ENCODE measurements at regions of chr11 and their contacts with region 1.

Region 1: GRCh38 chr11:75768112-75768908 is at the start of gene DGAT2:
- DNase-seq: peak; percentile 84
- ATAC-seq: peak; percentile 90
- H3K4me3 ChIP-seq: peak within 1 kb of the TSS; percentile 74 to 81 (median 80)
- H3K27ac ChIP-seq: peak within 1 kb of the TSS; percentile 90
- H3K4me1 ChIP-seq: peaks cover 73% of the 10 kb centered on the region
- H3K27me3 ChIP-seq: no peaks in the 10 kb centered on the region
- CTCF ChIP-seq: peak; percentile 95
- EP300 ChIP-seq: peak; percentile 23; a peak in 2 of 4 replicates
- POLR2A ChIP-seq: peak; percentile 61 to 83
- RAD21 ChIP-seq: peak; percentile 93
- total RNA-seq, gene DGAT2: 39.4 and 65.6 TPM in 2 replicates

Region 2: DNA sequence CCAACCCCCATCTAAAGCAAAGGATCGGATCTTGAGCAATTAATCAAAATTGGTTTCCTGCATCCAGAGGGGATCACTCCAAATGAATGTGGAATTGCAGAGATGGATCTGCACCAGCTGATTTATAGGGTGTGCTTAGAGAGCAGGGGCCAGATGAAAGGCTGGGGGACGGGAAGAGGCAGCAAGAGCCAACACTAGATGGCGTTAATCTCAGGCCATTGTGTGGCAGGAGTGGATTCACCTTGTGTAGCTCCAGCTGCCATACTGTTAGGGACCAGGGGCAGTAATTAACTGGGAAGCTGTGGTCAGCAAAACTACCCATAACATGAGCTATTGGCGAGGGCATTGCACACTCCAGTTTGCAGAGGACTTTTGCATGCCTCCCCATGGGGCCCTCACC is 170.7 kb before region 1 on chr11:
- CTCF ChIA-PET with region 1: interaction called, 6 read pairs
- POLR2A ChIA-PET with region 1: no interaction called
- in situ Hi-C with region 1: loop called (anchors 5 kb)
- intact Hi-C with region 1: no loop called
- DNase-seq: peak; percentile 36
- ATAC-seq: peak; percentile 86
- H3K4me3 ChIP-seq: no peak overlapping the region
- H3K27ac ChIP-seq: no peak overlapping the region
- H3K4me1 ChIP-seq: peaks cover 10% of the 10 kb centered on the region
- H3K27me3 ChIP-seq: peaks cover 2 to 14% of the 10 kb centered on the region in 2 experiments; a peak in 3 of 5 replicates
- CTCF ChIP-seq: peak; percentile 78
- EP300 ChIP-seq: no peak
- POLR2A ChIP-seq: no peak
- RAD21 ChIP-seq: no peak; the same call in 1 of the 2 replicates

Region 3: GRCh38 chr11:75717608-75718418 is 50.5 kb before region 1 on chr11 and contains the start of gene MOGAT2:
- CTCF ChIA-PET with region 1: interaction called, 19 read pairs
- POLR2A ChIA-PET with region 1: interaction called, 50 read pairs
- in situ Hi-C with region 1: loop called (anchors 5 kb)
- intact Hi-C with region 1: loop called (anchors 1 kb)
- DNase-seq: no peak
- ATAC-seq: no peak
- H3K4me3 ChIP-seq: peak within 1 kb of the TSS in 1 of 3 experiments; percentile 76; a peak in 2 of 6 replicates
- H3K27ac ChIP-seq: peak within 1 kb of the TSS; percentile 79
- H3K4me1 ChIP-seq: peaks cover 77% of the 10 kb centered on the region
- H3K27me3 ChIP-seq: no peaks in the 10 kb centered on the region
- CTCF ChIP-seq: no peak
- EP300 ChIP-seq: no peak
- POLR2A ChIP-seq: no peak
- RAD21 ChIP-seq: no peak
- total RNA-seq, gene MOGAT2: 27.2 and 27.8 TPM in 2 replicates

Region 4: DNA sequence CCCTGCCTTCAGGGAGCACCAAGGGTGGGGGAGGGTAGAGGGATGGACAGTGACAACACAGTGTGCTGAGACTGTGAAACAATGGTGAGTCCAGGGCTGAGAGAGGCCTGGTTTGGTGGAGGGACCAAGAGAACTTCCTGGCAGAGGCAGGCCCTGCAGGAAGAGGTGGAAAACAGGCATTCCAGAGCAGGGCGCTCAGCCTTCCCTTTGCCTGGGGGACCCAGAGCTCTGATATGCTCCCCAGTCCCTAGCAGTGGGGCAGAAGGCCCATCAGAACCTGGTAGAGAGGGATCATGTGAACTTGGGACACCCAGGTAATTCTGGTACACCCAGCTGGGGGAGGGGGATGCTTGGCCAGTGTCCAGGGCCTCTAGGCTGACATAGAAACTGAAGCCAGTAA is 29.5 kb after region 1 on chr11:
- CTCF ChIA-PET with region 1: interaction called, 5 read pairs
- POLR2A ChIA-PET with region 1: interaction called, 11 read pairs
- in situ Hi-C with region 1: no loop called
- intact Hi-C with region 1: loop called (anchors 5 kb)
- DNase-seq: no peak
- ATAC-seq: no peak
- H3K4me3 ChIP-seq: no peak overlapping the region
- H3K27ac ChIP-seq: no peak overlapping the region
- H3K4me1 ChIP-seq: peaks cover 61% of the 10 kb centered on the region
- H3K27me3 ChIP-seq: no peaks in the 10 kb centered on the region
- CTCF ChIP-seq: no peak
- EP300 ChIP-seq: no peak
- POLR2A ChIP-seq: no peak
- RAD21 ChIP-seq: no peak